ENCODE measurements at regions of chr4 and their contacts with region 1.

Region 1: GRCh38 chr4:20773144-20773997 is 73.1 kb downstream of the PACRGL start:
- DNase-seq: peak in 5 of 6 donors; percentile 14 to 55 (median 22)
- ATAC-seq: peak; percentile 68 to 90 (median 87)
- H3K4me3 ChIP-seq: no peak overlapping the region
- H3K27ac ChIP-seq: no peak overlapping the region
- H3K4me1 ChIP-seq: no peaks in the 10 kb centered on the region
- H3K27me3 ChIP-seq: no peaks in the 10 kb centered on the region
- CTCF ChIP-seq: peak; percentile 40 to 63 (median 47)

Region 2: GRCh38 chr4:20666012-20666860 is 107.1 kb before region 1 on chr4:
- intact Hi-C with region 1: no loop called
- DNase-seq: no peak
- ATAC-seq: no peak
- H3K4me3 ChIP-seq: no peak overlapping the region
- H3K27ac ChIP-seq: no peak overlapping the region
- H3K4me1 ChIP-seq: no peaks in the 10 kb centered on the region
- H3K27me3 ChIP-seq: no peaks in the 10 kb centered on the region
- CTCF ChIP-seq: no peak

Region 3: GRCh38 chr4:21134994-21135393 is 361.6 kb after region 1 on chr4:
- intact Hi-C with region 1: loop called in 1 of 3 experiments (anchors 10 kb)
- DNase-seq: no peak
- ATAC-seq: peak in 2 of 4 donors; percentile 32 to 57
- H3K4me3 ChIP-seq: no peak overlapping the region
- H3K27ac ChIP-seq: no peak overlapping the region
- H3K4me1 ChIP-seq: no peaks in the 10 kb centered on the region
- H3K27me3 ChIP-seq: no peaks in the 10 kb centered on the region
- CTCF ChIP-seq: no peak

Region 4: DNA sequence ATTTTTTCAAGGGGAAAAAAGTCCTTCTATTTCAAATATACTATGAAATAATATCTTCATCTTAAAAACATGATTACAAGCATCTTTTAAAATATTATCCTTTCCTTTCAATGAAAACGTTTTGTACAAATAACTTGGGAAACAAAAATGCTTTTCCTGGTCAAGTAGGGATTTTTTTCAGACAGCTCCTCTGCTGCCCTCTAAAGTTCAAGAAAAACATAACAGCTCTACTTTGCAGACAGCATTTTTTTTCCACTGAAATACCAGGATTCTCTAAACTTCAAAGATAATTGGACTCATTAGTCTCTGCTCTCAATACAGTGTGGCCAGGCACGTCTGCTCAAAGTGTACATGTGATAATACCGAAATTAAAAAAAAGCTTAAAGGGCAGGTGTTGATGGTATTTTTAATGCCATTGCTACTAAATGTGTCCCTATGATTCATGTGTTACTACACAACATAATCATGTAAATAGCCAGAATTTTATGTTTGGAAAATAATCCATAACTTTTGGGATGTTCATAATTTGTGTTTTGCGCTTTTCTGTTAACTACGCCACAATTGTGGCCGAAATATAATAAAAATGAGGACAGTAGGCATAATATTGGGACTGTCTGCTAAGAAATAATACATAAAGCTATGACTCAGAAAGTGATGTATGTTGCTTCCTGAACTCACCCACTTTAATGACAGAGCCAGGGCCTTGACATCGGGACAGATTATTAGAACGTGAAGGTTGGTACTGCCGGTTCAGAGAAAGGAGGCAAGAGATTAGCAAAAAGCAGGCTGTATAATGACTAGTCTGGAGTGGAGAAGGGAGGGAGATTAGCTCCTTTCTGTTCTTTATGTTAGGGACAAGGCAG is 696.3 kb after region 1 on chr4:
- intact Hi-C with region 1: loop called in 2 of 3 experiments (anchors 5 to 10 kb)
- DNase-seq: no peak
- ATAC-seq: peak in 2 of 4 donors; percentile 41 to 48
- H3K4me3 ChIP-seq: no peak overlapping the region
- H3K27ac ChIP-seq: no peak overlapping the region
- H3K4me1 ChIP-seq: no peaks in the 10 kb centered on the region
- H3K27me3 ChIP-seq: no peaks in the 10 kb centered on the region
- CTCF ChIP-seq: peak in 3 of 4 donors; percentile 25 to 31 (median 27)

Region 5: DNA sequence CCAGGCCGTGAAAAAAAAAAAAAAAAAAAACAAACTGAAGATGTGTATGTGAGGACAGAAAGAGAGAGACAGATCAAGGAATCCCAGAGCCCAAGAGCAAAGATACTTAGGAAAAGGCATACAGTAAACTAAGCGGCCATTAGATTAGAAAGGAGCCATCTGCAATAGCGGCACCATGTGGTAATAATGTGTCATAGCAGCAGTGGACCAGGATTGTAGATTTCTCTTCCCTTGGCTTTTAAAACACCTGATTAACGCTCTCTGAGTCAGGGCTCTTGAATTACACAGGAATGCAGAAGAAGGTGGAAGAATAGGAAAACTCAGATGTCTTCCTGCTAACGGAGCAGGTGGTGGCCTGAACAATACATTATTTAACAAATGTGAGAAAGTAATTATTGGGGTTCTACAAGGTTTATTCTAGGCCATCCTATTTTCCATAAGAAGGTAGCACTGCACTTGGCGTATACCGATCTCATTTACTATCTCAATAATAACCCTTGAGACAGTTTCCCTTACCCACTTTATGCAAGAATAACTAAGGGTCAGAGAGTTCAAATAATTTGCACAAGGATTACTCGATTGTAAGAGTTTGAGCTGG is 992.5 kb after region 1 on chr4:
- intact Hi-C with region 1: loop called in 1 of 3 experiments (anchors 10 kb)
- DNase-seq: peak in 1 of 6 donors; percentile 45
- ATAC-seq: peak; percentile 64 to 93 (median 86)
- H3K4me3 ChIP-seq: no peak overlapping the region
- H3K27ac ChIP-seq: no peak overlapping the region
- H3K4me1 ChIP-seq: no peaks in the 10 kb centered on the region
- H3K27me3 ChIP-seq: peaks cover 0 to 9% (median 0%) of the 10 kb centered on the region in 4 donors
- CTCF ChIP-seq: peak; percentile 72 to 84 (median 74)